Naive thymus-derived CD8-positive, alpha-beta T cell (primary cell): ENCODE measurements at regions of chr2 and their contacts with region 1.

Region 1: GRCh38 chr2:96856776-96857673 is 791 bp downstream of the ANKRD39 start:
- DNase-seq: peak in 5 of 10 donors; percentile 21 to 72 (median 39)
- ATAC-seq: peak in 1 of 2 donors; percentile 2
- H3K4me3 Mint-ChIP-seq: peak overlapping the region; percentile 72 to 92 (median 90)
- H3K27ac Mint-ChIP-seq: peak overlapping the region; percentile 57 to 94 (median 84)
- H3K4me1 Mint-ChIP-seq: peaks cover 23 to 48% (median 46%) of the 10 kb centered on the region in 4 donors
- H3K27me3 Mint-ChIP-seq: no peaks in the 10 kb centered on the region

Region 2: DNA sequence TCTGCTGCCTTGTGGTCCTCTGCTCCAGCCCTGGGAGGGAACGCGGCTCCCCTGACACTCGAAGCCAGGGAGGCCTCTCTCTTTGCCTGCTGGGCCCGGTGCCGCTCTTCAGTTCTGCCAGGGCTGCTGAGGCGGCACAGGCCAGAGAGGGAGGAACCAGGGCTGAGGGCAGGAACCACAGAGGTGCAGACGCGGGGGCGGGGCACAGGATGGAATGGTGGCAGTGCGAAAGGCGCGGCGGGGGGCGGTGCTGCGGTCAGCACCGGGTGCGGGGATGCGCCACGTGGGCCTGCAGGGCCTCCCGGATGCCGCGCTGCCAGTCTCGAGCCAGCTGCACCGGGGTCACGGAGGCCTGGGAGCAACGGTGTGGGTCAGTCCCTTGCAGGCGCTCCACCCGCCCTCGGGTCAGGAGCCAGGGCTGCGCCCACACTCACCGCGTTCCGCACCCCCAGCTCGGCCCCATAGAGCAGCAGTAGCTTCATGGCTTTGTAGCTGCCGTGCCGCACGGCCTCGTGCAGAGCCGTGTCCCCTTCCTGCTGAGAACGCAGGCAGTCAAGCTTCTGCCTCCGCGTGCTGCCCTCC is 17.6 kb before region 1 on chr2:
- POLR2A ChIA-PET with region 1: interaction called, 26 read pairs
- DNase-seq: peak; percentile 62 to 89 (median 80)
- ATAC-seq: peak; percentile 96 to 98
- H3K4me3 Mint-ChIP-seq: peak overlapping the region; percentile 13 to 81 (median 74)
- H3K27ac Mint-ChIP-seq: peak overlapping the region in 8 of 10 donors; percentile 46 to 92 (median 81)
- H3K4me1 Mint-ChIP-seq: peaks cover 10 to 27% (median 16%) of the 10 kb centered on the region in 4 donors
- H3K27me3 Mint-ChIP-seq: no peaks in the 10 kb centered on the region

Region 3: DNA sequence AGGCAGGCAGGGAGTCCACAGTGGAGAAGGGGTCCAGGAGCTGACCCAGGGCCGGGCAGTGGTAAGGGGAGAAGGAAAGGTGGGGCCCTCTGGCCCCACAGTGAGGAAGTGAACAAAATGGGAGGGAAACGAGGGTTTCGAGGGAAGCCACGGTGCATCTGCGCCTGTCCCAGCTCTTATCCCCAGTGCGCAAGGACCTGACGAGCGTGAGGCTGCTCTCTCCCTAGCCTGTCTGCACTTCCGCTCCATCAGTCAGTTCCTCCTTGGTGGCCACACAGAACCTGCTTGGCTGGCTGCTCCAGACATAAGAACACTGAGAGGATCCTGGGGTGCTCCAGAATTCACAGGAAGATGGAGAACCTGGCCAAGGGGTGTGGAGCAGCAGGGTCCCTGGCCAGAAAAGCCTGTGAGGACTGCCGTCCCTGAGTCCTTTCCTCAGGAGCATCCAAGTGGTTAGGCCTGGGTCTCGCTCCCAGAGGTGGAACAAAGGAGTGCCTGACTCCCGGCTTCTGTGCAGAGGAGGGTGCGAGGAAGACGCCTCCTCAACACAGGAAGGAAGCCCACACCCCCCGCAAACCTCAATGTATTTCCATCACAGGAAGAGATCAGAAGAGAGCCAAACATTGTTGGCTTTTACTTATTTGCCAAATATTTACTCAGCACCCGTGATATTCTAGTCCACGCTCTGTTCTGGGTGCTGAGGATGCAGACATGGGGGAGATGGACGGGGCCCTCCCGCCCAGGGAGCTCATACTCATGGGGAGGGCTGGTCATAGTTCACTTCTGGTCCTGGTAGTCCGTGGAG is 56.6 kb after region 1 on chr2:
- POLR2A ChIA-PET with region 1: interaction called, 17 read pairs
- DNase-seq: peak; percentile 26 to 78 (median 44)
- ATAC-seq: peak; percentile 82 to 85
- H3K4me3 Mint-ChIP-seq: peak overlapping the region; percentile 73 to 95 (median 88)
- H3K27ac Mint-ChIP-seq: peak overlapping the region; percentile 87 to 98 (median 96)
- H3K4me1 Mint-ChIP-seq: peaks cover 37 to 79% (median 66%) of the 10 kb centered on the region in 4 donors
- H3K27me3 Mint-ChIP-seq: no peaks in the 10 kb centered on the region

Region 4: DNA sequence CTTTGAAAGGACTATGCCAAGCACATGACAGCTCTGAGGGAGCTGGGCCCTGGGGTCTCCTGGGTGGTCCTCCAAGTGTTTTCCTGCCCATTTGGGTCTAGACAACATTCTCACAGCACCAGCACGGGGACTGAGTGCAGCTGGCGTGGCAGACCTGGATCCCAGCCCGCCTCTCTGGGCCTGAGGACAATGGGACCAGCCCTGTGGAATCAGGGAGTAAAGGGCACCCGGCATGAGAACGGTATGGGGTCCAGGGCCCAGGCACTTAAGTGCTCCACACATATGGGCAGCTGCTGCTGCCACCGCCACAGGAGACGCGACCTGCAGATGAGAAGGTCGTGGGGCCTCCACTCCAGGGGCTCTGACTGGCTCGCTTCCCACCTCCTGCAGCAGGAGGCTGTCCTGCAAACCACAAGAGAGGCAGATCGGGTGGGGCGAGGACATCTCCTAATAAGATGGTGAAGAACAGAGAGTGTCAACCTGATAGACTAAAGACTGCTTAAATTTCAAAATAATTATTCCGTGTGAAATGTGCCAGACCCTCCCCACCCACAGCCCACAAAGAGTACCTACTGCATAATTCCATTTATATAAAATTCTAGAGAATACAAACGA is 83.1 kb after region 1 on chr2:
- POLR2A ChIA-PET with region 1: interaction called, 12 read pairs
- DNase-seq: no peak
- ATAC-seq: no peak
- H3K4me3 Mint-ChIP-seq: peak overlapping the region in 5 of 10 donors; percentile 8 to 86 (median 78)
- H3K27ac Mint-ChIP-seq: peak overlapping the region in 7 of 10 donors; percentile 0 to 98 (median 72)
- H3K4me1 Mint-ChIP-seq: peaks cover 12 to 47% (median 38%) of the 10 kb centered on the region in 4 donors
- H3K27me3 Mint-ChIP-seq: peaks cover 0 to 2% (median 0%) of the 10 kb centered on the region in 5 donors

Region 5: GRCh38 chr2:96960153-96960961 is 103.3 kb after region 1 on chr2:
- POLR2A ChIA-PET with region 1: interaction called, 47 read pairs
- DNase-seq: peak; percentile 61 to 92 (median 80)
- ATAC-seq: peak in 1 of 2 donors; percentile 22
- H3K4me3 Mint-ChIP-seq: peak overlapping the region in 8 of 10 donors; percentile 64 to 77 (median 72)
- H3K27ac Mint-ChIP-seq: peak overlapping the region; percentile 48 to 98 (median 97)
- H3K4me1 Mint-ChIP-seq: peaks cover 20 to 55% (median 54%) of the 10 kb centered on the region in 4 donors
- H3K27me3 Mint-ChIP-seq: peaks cover 0 to 1% (median 0%) of the 10 kb centered on the region in 5 donors